Activated CD4-positive, alpha-beta T cell treated with anti-CD3 and anti-CD28 coated beads, Interleukin-2, amount 10 ng/mL, durations not matched to agents 7 days and 5 days (primary cell): ENCODE measurements at regions of chr22 and their contacts with region 1.

Region 1: GRCh38 chr22:44710474-44711457 is 8.8 kb downstream of the PRR5 start:
- DNase-seq: no peak
- H3K4me3 Mint-ChIP-seq: no peak overlapping the region
- H3K27ac Mint-ChIP-seq: peak overlapping the region; percentile 50
- H3K4me1 Mint-ChIP-seq: peaks cover 11% of the 10 kb centered on the region
- H3K27me3 Mint-ChIP-seq: no peaks in the 10 kb centered on the region

Region 2: DNA sequence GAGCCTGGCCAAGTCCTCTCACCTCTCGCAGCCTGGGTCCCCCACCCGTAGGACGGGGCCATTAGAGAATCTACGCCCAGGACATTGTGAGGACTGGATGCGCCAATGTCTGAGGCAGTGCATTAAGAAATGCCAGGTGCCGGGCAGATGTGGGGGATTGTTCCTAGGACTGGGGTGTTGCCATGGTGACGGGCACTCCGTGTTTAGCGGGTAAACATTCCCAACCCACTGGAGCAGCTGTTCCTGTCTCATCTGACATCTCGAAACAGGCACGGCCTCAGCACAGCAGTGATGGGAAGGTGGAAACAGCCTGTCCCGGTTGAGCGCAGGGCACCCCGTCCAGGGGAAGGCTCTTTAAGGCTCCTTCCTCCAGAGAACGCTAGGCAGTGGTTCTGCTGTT is 113.2 kb before region 1 on chr22:
- CTCF ChIA-PET with region 1: no interaction called
- POLR2A ChIA-PET with region 1: no interaction called
- DNase-seq: no peak
- H3K4me3 Mint-ChIP-seq: no peak overlapping the region
- H3K27ac Mint-ChIP-seq: no peak overlapping the region
- H3K4me1 Mint-ChIP-seq: peaks cover 3% of the 10 kb centered on the region
- H3K27me3 Mint-ChIP-seq: peaks cover 24% of the 10 kb centered on the region

Region 3: DNA sequence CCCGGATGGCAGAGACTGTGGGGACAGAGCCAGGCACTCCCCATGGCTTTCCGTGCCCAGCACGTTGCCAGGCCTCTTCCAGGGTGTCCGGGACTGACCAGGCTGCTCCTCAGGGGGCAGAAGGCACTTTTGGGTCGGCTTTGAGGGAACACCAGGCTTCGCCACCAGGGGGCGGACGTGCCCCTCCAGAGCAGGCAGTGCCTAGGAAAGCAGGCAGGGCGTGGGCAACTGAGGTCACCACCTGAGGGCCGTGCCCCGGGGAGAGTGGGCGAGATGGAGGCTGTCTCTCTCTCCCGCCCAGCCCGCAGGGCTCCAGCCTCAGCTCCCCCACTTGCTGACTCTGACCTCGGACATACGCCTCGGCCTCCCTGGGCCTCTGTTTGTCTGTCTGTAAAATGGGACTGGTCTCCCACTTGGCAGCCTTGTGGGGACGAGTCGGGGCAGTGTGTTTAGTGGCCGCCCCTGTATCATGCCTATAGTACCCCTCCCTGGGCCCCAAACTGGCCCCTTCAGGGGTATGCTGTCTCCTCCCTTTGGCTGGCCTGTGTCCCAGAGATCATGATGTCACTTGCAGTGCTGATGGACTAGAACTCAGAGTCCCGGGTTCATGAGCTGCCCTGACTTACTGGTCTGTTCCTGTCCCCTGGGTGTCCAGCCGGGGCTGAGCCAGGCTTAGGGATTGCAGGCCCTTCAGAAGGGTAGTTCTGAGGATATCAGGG is 13.2 kb before region 1 on chr22:
- CTCF ChIA-PET with region 1: interaction called, 15 read pairs
- POLR2A ChIA-PET with region 1: no interaction called
- DNase-seq: peak; percentile 84
- H3K4me3 Mint-ChIP-seq: no peak overlapping the region
- H3K27ac Mint-ChIP-seq: no peak overlapping the region
- H3K4me1 Mint-ChIP-seq: peaks cover 8% of the 10 kb centered on the region
- H3K27me3 Mint-ChIP-seq: no peaks in the 10 kb centered on the region